Activated CD4-positive, alpha-beta memory T cell treated with anti-CD3 and anti-CD28 coated beads, Interleukin-2, amount 10 ng/mL, durations not matched to agents 7 days and 5 days (primary cell): ENCODE measurements at regions of chr12 and their contacts with region 1.

Region 1: GRCh38 chr12:15882118-15882971 is at the start of gene STRAP:
- DNase-seq: peak; percentile 97
- H3K4me3 Mint-ChIP-seq: peak within 1 kb of the TSS; percentile 97
- H3K27ac Mint-ChIP-seq: peak within 1 kb of the TSS; percentile 95
- H3K4me1 Mint-ChIP-seq: peaks cover 46% of the 10 kb centered on the region
- H3K27me3 Mint-ChIP-seq: no peaks in the 10 kb centered on the region
- total RNA-seq, gene STRAP: 75.5 to 79.8 TPM

Region 2: GRCh38 chr12:15846887-15847286 is 35.5 kb before region 1 on chr12:
- CTCF ChIA-PET with region 1: no interaction called
- POLR2A ChIA-PET with region 1: no interaction called
- DNase-seq: no peak
- H3K4me3 Mint-ChIP-seq: no peak overlapping the region
- H3K27ac Mint-ChIP-seq: no peak overlapping the region
- H3K4me1 Mint-ChIP-seq: no peaks in the 10 kb centered on the region
- H3K27me3 Mint-ChIP-seq: peaks cover 7% of the 10 kb centered on the region

Region 3: GRCh38 chr12:15863984-15864383 is 18.4 kb before region 1 on chr12:
- CTCF ChIA-PET with region 1: no interaction called
- POLR2A ChIA-PET with region 1: no interaction called
- DNase-seq: no peak
- H3K4me3 Mint-ChIP-seq: peak overlapping the region; percentile 0
- H3K27ac Mint-ChIP-seq: no peak overlapping the region
- H3K4me1 Mint-ChIP-seq: peaks cover 7% of the 10 kb centered on the region
- H3K27me3 Mint-ChIP-seq: peaks cover 31% of the 10 kb centered on the region

Region 4: DNA sequence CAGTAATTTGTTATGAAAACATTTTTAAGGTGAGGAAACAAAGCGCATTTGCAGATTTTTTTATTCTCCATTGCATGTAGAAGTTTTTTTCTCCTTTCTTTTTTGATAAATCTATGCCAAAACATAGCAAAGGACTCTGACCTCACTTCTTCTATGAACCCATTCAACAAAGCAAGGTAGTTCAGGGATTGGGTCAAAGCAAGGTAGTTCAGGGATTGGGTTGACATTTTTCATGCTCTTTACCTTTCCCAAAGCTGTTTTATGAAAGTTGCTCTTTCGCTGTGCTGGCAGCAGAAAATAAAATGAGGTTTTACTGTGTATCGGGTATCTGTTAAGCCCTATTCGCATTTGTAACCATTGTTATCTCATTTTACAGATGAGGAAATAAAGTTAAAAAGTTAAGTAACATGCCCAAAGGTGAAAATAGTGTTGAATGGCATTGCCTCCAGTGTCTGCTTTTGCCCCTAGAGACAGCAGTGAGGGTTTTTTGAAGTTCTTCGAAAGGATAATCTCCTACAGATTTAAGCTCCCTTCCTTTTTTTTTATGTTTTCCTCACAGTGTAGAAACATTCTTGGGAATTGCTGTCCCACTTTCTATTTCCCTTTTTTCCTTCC is 10.4 kb after region 1 on chr12:
- CTCF ChIA-PET with region 1: interaction called, 8 read pairs
- POLR2A ChIA-PET with region 1: interaction called, 17 read pairs
- DNase-seq: no peak
- H3K4me3 Mint-ChIP-seq: no peak overlapping the region
- H3K27ac Mint-ChIP-seq: no peak overlapping the region
- H3K4me1 Mint-ChIP-seq: peaks cover 24% of the 10 kb centered on the region
- H3K27me3 Mint-ChIP-seq: no peaks in the 10 kb centered on the region

Region 5: DNA sequence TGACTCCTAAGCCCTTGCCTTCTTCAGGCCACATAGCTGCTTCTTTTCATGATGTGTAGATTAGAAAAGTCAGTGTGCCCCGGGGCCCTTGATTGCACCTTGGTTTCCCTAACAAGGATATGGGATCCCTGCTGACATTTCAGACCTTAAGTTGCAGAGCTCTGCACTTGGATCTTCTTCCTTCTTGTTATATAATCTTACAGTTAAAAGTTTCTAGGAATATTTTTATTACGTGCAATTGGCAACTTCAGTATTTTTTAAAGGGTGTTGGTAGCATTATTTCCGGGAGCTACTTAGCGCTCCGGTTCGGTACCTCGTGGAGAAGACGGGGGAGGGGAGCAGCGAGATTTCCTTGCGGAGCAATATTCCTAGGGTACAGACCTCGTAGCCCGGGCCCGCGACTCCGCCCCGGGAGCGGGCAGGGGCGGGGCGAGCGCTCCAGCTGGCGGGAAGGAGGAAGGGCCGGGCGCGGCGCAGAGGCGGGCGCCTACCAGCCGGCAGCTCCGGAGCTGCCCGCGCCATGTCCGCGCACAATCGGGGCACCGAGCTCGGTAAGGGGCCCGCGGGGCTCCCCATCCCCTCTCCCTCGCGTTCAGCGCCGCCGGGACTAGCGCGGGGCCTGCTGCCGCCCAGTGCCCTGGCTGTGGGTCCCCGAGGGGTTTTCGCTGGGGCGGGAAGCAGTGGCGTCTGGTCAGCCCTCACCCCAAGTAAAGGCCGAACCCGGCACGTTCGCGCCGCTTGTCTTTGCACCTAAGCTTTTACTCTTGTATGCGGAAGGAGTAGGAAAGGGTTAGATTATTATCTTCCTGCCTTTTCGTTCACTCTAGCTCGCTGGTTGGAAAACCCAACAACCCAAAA is 28.7 kb after region 1 on chr12 and contains the start of gene DERA:
- CTCF ChIA-PET with region 1: interaction called, 4 read pairs
- POLR2A ChIA-PET with region 1: interaction called, 39 read pairs
- DNase-seq: peak; percentile 60
- H3K4me3 Mint-ChIP-seq: peak within 1 kb of the TSS; percentile 80
- H3K27ac Mint-ChIP-seq: peak within 1 kb of the TSS; percentile 61
- H3K4me1 Mint-ChIP-seq: peaks cover 20% of the 10 kb centered on the region
- H3K27me3 Mint-ChIP-seq: no peaks in the 10 kb centered on the region
- total RNA-seq, gene DERA: 21.3 to 24.4 TPM

Region 6: DNA sequence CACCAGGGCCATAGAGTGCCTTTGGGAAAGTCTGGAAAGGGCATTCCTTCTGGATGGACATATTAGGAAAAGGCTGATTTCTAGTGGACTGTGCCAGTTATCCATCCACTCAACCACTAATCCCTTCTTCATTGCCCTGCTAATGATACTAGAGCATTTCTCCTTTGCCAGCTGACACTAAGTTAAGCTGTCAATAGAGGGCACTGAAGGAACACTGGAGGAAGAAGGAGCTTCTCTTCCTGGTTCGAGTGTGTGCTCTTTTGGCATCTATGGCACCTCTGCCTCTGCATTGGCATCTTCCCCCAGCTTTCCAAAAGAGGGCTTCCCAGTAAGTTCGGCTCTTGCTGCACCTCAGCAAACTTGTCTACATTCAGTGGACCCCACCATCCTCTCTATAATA is 194.2 kb after region 1 on chr12:
- CTCF ChIA-PET with region 1: no interaction called
- POLR2A ChIA-PET with region 1: no interaction called
- DNase-seq: no peak
- H3K4me3 Mint-ChIP-seq: no peak overlapping the region
- H3K27ac Mint-ChIP-seq: no peak overlapping the region
- H3K4me1 Mint-ChIP-seq: no peaks in the 10 kb centered on the region
- H3K27me3 Mint-ChIP-seq: no peaks in the 10 kb centered on the region